ENCODE measurements at regions of chr4 and their contacts with region 1.

Region 1: DNA sequence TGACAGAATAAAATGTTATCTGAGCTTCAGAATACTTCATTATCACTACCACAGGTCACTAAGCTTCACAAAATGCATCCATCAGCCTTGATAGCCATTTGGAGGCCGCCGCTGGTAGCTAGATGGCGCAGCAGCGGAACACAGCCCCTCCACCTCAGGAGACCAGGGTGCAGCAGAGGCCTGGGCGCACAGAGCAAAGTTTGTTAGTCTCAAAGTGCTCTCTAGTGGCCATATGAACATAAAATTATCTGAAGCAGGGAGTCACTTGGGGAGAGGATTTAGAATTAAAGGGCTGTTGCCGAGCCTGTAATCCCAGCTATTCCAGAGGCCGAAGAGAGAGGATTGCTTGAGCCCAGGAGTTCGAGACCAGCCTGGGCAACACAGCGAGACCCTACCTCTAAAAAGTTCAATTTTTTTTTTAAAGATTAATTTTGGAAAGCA is 8.1 kb upstream of the DCTD start:
- DNase-seq: peak; percentile 77
- H3K4me3 ChIP-seq: no peak overlapping the region
- H3K27ac ChIP-seq: no peak overlapping the region
- H3K4me1 ChIP-seq: peaks cover 0 to 17% (median 13%) of the 10 kb centered on the region in 4 donors
- H3K27me3 ChIP-seq: no peaks in the 10 kb centered on the region
- CTCF ChIP-seq: peak; percentile 34 to 47 (median 44)
- EP300 ChIP-seq: no peak
- POLR2A ChIP-seq: no peak

Region 2: GRCh38 chr4:182955411-182955810 is 30.1 kb after region 1 on chr4:
- in situ Hi-C with region 1: no loop called
- intact Hi-C with region 1: loop called (anchors 1 kb)
- DNase-seq: no peak
- H3K4me3 ChIP-seq: no peak overlapping the region
- H3K27ac ChIP-seq: no peak overlapping the region
- H3K4me1 ChIP-seq: no peaks in the 10 kb centered on the region
- H3K27me3 ChIP-seq: no peaks in the 10 kb centered on the region
- CTCF ChIP-seq: no peak
- EP300 ChIP-seq: no peak
- POLR2A ChIP-seq: no peak